ENCODE measurements at regions of chr12 and their contacts with region 1.

Region 1: GRCh38 chr12:27940756-27941402 is 31.7 kb downstream of the PTHLH start:
- DNase-seq: peak; percentile 83
- H3K4me3 Mint-ChIP-seq: no peak overlapping the region
- H3K27ac Mint-ChIP-seq: no peak overlapping the region
- H3K4me1 Mint-ChIP-seq: peaks cover 6% of the 10 kb centered on the region
- H3K27me3 Mint-ChIP-seq: no peaks in the 10 kb centered on the region
- CTCF ChIP-seq: peak; percentile 70

Region 2: DNA sequence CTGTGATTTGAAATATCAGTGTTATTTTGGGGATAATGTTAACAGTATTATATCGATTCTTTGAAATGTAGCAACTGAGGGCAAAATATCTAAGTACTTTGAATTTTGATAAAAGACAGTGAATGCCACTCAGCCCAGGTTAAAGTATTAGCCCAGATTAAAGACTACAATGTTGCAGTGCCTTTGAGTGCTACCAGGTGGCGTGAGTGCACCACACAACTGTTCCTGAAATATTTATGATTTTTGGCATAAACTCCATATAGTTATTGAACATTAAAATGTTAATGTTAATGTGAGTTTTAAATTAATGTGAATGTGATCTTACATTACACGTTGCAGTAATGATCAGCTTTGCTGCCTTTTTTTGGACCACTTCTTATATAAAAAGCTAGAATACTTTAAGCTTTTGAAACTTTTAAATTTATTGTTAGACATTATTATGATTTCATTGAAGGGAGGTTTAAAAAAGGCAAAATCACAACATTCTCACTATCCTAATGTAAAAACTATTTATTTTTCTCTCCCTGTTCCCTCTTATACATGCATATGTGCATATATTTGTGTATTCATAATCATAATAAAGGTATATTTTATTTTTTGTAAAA is 207.7 kb before region 1 on chr12:
- CTCF ChIA-PET with region 1: interaction called, 23 read pairs
- POLR2A ChIA-PET with region 1: interaction called, 3 read pairs
- intact Hi-C with region 1: loop called (anchors 1 kb)
- DNase-seq: peak; percentile 41
- H3K4me3 Mint-ChIP-seq: no peak overlapping the region
- H3K27ac Mint-ChIP-seq: no peak overlapping the region
- H3K4me1 Mint-ChIP-seq: peaks cover 5% of the 10 kb centered on the region
- H3K27me3 Mint-ChIP-seq: no peaks in the 10 kb centered on the region
- CTCF ChIP-seq: peak; percentile 91

Region 3: DNA sequence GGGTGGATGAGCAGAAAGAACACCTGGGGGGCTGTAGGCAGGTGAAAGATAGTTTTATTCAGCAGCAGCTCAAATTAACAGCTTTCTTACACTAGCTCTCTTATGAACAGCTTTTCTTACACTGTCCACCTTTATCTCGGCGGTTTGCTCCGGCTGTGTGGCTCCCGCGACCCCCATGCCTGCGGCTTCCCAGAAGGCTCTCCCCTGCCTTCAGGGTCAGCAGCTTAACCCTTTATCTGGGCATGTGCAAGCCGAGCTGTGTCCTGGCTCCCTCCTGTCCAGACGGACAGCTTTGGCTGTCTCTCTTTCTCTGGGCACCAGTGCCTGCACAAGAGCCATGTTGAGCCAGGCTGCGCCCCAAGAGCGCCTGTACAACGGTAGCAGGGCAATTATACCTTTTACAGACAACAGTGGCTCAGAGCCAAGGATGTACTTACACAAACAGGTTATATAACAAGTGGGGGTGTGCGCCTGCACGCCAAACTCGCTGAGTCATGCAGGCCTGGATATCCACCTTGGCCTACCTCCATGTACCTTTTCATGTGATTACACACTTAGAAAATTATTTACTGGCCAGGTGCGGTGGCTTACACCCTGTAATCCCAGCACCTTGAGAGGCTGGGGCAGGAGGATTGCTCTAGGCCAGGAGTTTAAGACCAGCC is 189.4 kb before region 1 on chr12:
- CTCF ChIA-PET with region 1: interaction called, 4 read pairs
- POLR2A ChIA-PET with region 1: interaction called, 3 read pairs
- intact Hi-C with region 1: loop called (anchors 5 kb)
- DNase-seq: peak; percentile 88
- H3K4me3 Mint-ChIP-seq: no peak overlapping the region
- H3K27ac Mint-ChIP-seq: peak overlapping the region; percentile 74
- H3K4me1 Mint-ChIP-seq: peaks cover 23% of the 10 kb centered on the region
- H3K27me3 Mint-ChIP-seq: no peaks in the 10 kb centered on the region
- CTCF ChIP-seq: no peak

Region 4: DNA sequence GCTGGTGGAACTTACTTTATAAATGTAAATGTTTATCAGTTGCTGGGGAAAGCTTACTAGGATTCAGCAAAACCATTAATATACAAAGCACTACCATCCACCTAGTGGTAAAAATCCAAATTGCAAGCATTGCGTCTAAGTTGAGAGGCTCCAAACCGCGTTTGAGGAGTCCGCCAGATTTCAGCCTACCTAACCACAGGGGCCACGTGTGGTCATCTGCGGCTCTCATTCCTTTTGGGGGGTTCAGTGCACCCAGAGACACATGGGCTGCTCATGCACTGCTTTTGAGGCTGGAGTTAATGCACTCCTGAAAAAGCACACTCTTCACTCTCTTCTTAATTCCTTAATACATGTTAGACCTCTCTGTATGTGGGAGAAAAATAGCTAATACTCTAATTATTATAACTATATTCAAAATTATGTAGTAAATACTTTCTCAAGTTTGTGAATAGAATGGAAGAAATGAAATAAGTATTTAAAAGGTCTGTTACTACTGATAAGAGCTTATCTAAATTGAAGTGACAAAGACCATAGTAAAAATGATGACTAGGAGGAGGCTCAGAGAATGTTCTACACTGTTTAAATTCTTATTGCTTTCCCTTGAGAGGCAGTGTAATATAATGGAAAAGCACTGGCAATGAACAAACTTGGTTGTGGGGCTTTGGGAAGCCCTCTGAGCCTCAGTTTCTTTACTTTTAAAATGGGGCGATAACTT is 119.5 kb before region 1 on chr12:
- CTCF ChIA-PET with region 1: interaction called, 14 read pairs
- POLR2A ChIA-PET with region 1: interaction called, 4 read pairs
- intact Hi-C with region 1: loop called (anchors 2 kb)
- DNase-seq: peak; percentile 89
- H3K4me3 Mint-ChIP-seq: peak overlapping the region; percentile 64
- H3K27ac Mint-ChIP-seq: peak overlapping the region; percentile 89
- H3K4me1 Mint-ChIP-seq: peaks cover 5% of the 10 kb centered on the region
- H3K27me3 Mint-ChIP-seq: no peaks in the 10 kb centered on the region
- CTCF ChIP-seq: peak; percentile 80

Region 5: DNA sequence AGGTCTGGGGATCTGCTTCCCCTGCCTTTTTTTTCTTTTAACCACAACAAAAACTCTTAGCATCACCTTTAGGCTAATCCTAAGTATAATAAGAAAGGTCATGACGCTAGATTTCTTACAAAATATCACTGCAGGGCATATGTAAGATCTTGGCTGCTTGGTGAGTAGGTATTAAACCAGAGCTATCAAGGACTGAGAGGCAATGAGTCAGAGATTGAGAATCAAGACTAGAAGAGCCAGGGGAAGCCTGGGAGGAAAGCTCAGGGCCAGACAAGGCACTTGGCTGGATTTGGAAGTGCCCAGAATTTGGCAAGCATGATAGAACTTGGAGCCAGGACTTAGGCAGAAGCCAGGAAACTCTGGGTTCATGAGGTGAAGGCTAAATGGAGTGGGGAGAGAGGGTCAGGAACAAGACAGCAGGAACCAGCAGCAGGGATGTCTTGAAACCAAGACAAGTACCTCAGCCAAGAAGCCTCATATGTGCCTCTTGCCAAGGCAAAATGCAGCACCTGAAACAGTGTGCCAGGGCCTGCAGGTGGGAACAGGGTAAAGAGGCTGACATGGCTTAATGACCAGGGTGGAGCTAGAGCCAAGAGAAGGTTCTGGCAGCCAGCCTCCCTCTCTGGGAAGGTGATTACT is 18.3 kb before region 1 on chr12:
- CTCF ChIA-PET with region 1: interaction called, 27 read pairs
- POLR2A ChIA-PET with region 1: no interaction called
- intact Hi-C with region 1: no loop called
- DNase-seq: peak; percentile 98
- H3K4me3 Mint-ChIP-seq: no peak overlapping the region
- H3K27ac Mint-ChIP-seq: peak overlapping the region; percentile 20
- H3K4me1 Mint-ChIP-seq: peaks cover 19% of the 10 kb centered on the region
- H3K27me3 Mint-ChIP-seq: no peaks in the 10 kb centered on the region
- CTCF ChIP-seq: no peak

Region 6: DNA sequence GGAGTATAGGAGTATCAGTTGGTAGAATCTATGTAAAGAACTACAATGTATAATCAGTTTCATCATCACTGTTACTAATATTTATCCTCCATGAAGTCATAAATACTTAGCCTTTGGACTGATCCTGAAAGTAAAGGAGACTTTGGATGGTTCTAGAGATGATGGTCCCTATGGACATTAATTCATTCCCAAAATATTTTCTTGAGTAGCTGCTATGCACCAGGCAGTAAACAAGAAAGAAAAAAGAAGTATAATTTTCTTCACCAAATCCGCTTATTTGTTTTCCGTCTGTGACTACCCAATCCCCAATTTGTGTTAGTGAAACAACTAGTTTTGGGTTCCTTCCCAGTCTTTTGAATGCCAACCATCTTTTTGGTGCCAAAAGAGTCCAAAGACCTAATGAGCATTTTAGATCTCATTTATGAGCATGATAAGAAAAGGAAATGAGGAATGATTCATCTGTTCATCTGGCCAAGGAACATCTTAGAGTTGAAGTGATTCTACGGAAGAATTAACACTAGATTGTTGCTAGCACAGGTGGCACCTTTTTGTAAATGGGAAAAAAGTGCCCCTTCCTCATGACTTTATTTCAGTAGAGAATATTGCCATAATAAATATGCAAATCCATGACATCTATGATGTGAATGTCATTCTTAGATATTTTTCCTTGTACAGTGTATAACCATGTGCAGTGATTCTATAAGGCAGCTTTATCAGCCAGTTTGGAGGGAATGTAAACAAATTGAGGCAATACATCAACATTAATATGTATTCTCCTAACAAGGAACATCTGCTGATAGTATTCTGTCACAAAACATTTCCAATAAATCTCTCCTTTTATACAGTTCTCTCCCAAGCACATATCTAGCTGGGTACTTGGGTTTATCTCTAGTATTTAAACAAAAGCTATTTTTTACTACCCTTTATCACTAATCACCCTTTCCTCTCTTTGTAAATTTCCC is 164.3 kb after region 1 on chr12:
- CTCF ChIA-PET with region 1: no interaction called
- POLR2A ChIA-PET with region 1: no interaction called
- intact Hi-C with region 1: no loop called
- DNase-seq: no peak
- H3K4me3 Mint-ChIP-seq: no peak overlapping the region
- H3K27ac Mint-ChIP-seq: no peak overlapping the region
- H3K4me1 Mint-ChIP-seq: peaks cover 5% of the 10 kb centered on the region
- H3K27me3 Mint-ChIP-seq: no peaks in the 10 kb centered on the region
- CTCF ChIP-seq: no peak

Region 7: DNA sequence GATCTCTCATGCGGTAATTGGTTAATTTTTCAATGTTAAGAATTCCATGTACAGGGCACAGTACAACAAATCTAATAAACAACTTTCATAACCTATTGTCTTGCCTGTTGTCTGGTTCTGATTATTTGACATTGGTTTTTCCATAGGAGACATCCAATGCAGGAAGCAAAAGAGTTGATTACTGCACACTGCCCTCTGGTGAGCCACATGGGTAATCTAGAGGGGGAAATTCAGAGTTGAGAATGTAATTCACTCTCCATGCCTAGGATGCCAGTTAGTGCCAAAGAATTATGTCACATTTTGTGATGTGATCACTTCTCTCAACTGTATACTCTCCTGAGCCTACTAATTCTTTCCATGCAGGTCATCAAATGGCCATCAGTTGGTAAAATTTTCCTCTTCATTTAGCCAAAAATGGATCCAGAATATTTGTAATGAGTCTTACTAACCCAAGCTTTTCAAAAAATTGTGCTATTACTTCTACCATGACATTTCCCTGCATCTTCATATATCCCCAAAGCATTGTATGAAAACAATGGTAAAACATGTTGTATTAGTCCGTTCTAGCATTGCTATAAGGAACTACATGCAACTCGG is 231.7 kb after region 1 on chr12:
- CTCF ChIA-PET with region 1: interaction called, 8 read pairs
- POLR2A ChIA-PET with region 1: no interaction called
- intact Hi-C with region 1: loop called (anchors 1 kb)
- DNase-seq: peak; percentile 78
- H3K4me3 Mint-ChIP-seq: no peak overlapping the region
- H3K27ac Mint-ChIP-seq: no peak overlapping the region
- H3K4me1 Mint-ChIP-seq: peaks cover 10% of the 10 kb centered on the region
- H3K27me3 Mint-ChIP-seq: no peaks in the 10 kb centered on the region
- CTCF ChIP-seq: peak; percentile 63